ENCODE measurements at regions of chr6 and their contacts with region 1.

Region 1: GRCh38 chr6:116531675-116532570 is 13.6 kb downstream of the TRAPPC3L start:
- DNase-seq: peak; percentile 44 to 72 (median 47)
- ATAC-seq: peak; percentile 83 to 87
- H3K4me3 ChIP-seq: no peak overlapping the region
- H3K27ac ChIP-seq: no peak overlapping the region
- H3K4me1 ChIP-seq: no peaks in the 10 kb centered on the region
- H3K27me3 ChIP-seq: no peaks in the 10 kb centered on the region

Region 2: GRCh38 chr6:116287689-116288282 is 244.1 kb before region 1 on chr6:
- intact Hi-C with region 1: loop called in 3 of 4 experiments (anchors 5 to 10 kb)
- DNase-seq: no peak
- ATAC-seq: peak; percentile 68 to 73
- H3K4me3 ChIP-seq: no peak overlapping the region
- H3K27ac ChIP-seq: no peak overlapping the region
- H3K4me1 ChIP-seq: no peaks in the 10 kb centered on the region
- H3K27me3 ChIP-seq: no peaks in the 10 kb centered on the region

Region 3: DNA sequence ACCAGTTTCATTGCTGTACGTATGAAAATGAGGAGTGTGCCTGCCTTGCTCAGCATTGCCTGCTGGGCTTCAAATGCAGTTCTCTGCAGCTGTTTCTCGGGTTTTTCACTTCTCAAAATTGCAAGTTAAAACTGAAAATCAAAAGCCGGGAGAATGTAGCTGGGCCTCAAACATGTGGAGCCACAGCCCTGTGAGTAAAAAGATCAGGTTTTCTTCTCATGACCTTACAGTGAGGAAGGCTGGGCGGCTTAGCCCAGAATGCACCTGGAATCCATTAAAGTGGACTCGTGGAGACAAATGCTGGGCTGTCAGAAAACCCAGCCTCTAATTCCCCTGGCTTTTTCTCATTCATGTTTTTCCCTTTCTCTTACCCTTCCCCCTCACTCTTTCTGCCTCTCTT is 126.8 kb before region 1 on chr6:
- intact Hi-C with region 1: no loop called
- DNase-seq: no peak
- ATAC-seq: no peak
- H3K4me3 ChIP-seq: no peak overlapping the region
- H3K27ac ChIP-seq: peak overlapping the region; percentile 15
- H3K4me1 ChIP-seq: peaks cover 11% of the 10 kb centered on the region
- H3K27me3 ChIP-seq: no peaks in the 10 kb centered on the region

Measured in right cardiac atrium (tissue), 5 donors.